ENCODE measurements at regions of chr6 and their contacts with region 1.

Region 1: DNA sequence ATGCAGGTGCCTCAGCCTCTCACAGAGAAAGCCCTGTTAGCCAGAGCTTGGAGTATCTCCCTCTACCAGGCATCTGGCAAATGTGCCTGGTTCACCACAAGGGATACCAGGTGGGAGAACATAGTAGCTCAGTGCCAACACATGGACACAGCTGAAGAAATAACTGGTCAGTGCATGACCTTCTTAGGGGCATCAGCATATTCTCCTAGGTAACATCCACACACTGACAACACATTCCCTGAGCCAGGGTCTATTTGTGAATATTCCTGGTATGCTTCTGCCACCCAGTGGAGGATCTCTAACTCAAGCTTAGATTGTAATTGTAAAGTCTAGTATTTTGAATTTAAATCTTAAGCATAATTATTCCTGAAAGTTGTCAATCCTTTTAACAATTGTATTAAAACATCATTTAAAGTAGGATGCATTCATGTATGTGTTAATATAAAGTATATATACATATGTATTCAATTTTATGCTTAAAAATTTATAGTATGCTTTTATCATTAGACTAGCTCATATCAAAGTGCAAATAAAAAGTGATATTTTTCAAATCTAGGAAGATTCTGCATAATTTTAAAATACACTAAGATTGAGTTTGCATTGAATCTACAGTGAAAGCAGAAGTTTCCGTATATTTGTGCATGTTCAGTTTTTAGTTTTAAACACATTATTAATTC is 45.3 kb upstream of the COL21A1 start:
- DNase-seq: peak; percentile 47 to 58
- H3K4me3 ChIP-seq: no peak overlapping the region
- H3K4me1 ChIP-seq: no peaks in the 10 kb centered on the region
- H3K27me3 ChIP-seq: peaks cover 15% of the 10 kb centered on the region

Region 2: GRCh38 chr6:55276745-55277530 is 1015.7 kb before region 1 on chr6:
- in situ Hi-C with region 1: loop called (anchors 25 kb)
- DNase-seq: peak; percentile 48 to 63
- H3K4me3 ChIP-seq: no peak overlapping the region
- H3K4me1 ChIP-seq: no peaks in the 10 kb centered on the region
- H3K27me3 ChIP-seq: peaks cover 12% of the 10 kb centered on the region

Region 3: DNA sequence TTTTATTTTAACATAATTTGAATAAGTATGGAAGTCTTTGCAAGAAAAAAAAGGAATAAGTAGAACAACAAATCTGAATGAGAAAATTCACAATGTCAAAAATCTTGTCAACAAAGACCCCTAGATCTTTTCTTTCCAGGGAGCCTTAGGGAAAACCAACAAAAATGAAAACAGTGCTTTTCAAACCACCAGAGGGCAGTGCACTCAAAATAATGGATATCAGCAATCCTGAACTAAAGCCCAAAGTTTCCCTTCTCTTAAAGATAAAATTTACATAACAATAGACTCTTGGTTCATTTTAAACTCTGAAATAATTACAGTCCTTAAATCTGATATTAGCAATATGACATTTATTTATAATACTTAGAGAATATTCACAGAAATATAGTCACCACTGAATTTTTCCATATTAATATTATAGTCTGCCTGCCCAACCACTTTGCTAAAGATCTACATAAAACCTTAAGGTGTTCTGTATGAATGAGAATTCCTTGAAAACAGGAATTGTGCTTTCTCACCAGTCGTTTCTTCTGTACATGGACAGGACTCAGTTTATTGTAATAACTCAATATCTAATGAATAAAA is 311.9 kb before region 1 on chr6:
- in situ Hi-C with region 1: loop called (anchors 10 kb)
- DNase-seq: peak; percentile 64 to 72
- H3K4me3 ChIP-seq: no peak overlapping the region
- H3K4me1 ChIP-seq: no peaks in the 10 kb centered on the region
- H3K27me3 ChIP-seq: no peaks in the 10 kb centered on the region

Region 4: DNA sequence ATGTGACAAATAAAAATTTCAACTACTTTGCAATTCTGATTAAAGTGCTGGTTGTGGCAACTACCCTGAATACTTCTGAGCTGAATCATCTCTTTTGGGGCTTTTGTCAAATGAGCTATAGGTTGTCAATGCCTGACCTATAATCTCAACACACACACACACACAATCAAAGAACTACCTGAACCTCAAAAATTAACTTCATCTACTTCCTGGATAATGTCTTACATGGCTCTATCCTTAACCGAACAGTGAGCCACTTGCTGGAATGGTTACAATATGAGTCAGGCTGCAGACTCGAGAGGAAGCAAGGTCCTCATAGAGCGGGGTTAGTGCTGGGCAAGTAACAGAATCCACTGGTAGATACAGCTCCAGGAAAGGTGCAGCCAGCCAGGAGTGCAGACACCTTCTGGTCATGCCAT is 420.6 kb after region 1 on chr6:
- in situ Hi-C with region 1: no loop called
- DNase-seq: no peak
- H3K4me3 ChIP-seq: no peak overlapping the region
- H3K4me1 ChIP-seq: peaks cover 18% of the 10 kb centered on the region
- H3K27me3 ChIP-seq: no peaks in the 10 kb centered on the region

Measured in HAP-1 (cell line).